Right lobe of liver (tissue), 6 donors: ENCODE measurements at regions of chr19 and their contacts with region 1.

Region 1: GRCh38 chr19:2164020-2164998 is 576 bp downstream of the DOT1L start:
- DNase-seq: peak in 1 of 3 donors; percentile 75
- ATAC-seq: peak; percentile 0 to 19 (median 3)
- H3K4me3 ChIP-seq: peak overlapping the region; percentile 84 to 93 (median 89)
- H3K27ac ChIP-seq: peak overlapping the region; percentile 79 to 92 (median 85)
- H3K4me1 ChIP-seq: peaks cover 0 to 43% (median 22%) of the 10 kb centered on the region in 4 donors
- H3K27me3 ChIP-seq: no peaks in the 10 kb centered on the region
- CTCF ChIP-seq: no peak
- POLR2A ChIP-seq: no peak

Region 2: DNA sequence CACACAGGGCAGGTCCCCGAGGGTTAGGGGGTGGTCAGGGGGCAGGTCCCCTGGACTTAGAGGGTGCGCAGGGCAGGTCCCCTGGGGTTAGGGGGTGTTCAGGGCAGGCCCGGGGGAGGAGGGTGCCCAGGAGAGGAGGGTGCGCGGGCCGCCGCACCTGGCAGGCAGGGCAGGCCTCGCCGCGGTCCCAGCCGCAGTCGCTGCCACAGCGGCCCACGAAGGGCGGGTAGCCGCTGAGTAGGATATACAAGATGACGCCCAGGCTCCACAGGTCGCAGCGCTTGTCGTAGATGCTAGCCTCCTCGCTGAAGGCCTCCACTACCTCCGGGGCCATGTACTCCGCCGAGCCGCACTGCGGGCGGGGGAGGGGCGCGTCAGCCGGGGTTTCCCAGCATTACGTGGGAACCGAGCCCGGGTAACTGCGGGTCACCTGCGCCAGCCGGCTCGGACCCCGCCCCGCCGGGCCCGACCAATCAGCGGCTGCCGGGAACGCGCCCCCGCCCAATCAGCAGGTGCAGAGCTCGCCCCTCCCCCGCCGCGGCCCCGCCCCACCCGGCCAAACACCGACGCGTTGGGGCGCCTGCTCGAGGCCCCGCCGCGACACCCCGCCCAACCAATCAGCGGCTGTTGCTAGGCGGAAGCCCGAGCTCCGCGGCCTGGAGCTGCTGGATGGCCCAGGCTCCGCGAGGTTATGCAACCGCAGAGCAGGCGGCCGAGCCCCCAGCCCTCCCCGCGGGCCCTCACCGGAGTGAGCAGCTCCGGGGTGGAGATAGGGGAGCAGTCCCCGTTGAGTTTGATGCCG is 122.4 kb before region 1 on chr19:
- intact Hi-C with region 1: no loop called
- DNase-seq: peak; percentile 99
- ATAC-seq: peak; percentile 83 to 91 (median 88)
- H3K4me3 ChIP-seq: peak overlapping the region; percentile 14 to 54 (median 45)
- H3K27ac ChIP-seq: peak overlapping the region; percentile 83 to 97 (median 93)
- H3K4me1 ChIP-seq: peaks cover 0 to 72% (median 32%) of the 10 kb centered on the region in 4 donors
- H3K27me3 ChIP-seq: no peaks in the 10 kb centered on the region
- CTCF ChIP-seq: no peak
- POLR2A ChIP-seq: peak; percentile 13

Region 3: GRCh38 chr19:2273356-2274184 is 109.3 kb after region 1 on chr19:
- intact Hi-C with region 1: loop called in 1 of 2 experiments (anchors 5 kb)
- DNase-seq: peak; percentile 75 to 79 (median 79)
- ATAC-seq: peak; percentile 25 to 42 (median 35)
- H3K4me3 ChIP-seq: peak overlapping the region; percentile 18 to 40 (median 28)
- H3K27ac ChIP-seq: peak overlapping the region; percentile 25 to 43 (median 41)
- H3K4me1 ChIP-seq: peaks cover 0 to 32% (median 8%) of the 10 kb centered on the region in 4 donors
- H3K27me3 ChIP-seq: no peaks in the 10 kb centered on the region
- CTCF ChIP-seq: peak; percentile 92 to 98 (median 96)
- POLR2A ChIP-seq: no peak